GM13976 (cell line): ENCODE measurements at regions of chr18 and their contacts with region 1.

Region 1: GRCh38 chr18:79378542-79379250 is 17.0 kb upstream of the NFATC1 start:
- DNase-seq: peak; percentile 90
- CTCF ChIP-seq: peak; percentile 96

Region 2: DNA sequence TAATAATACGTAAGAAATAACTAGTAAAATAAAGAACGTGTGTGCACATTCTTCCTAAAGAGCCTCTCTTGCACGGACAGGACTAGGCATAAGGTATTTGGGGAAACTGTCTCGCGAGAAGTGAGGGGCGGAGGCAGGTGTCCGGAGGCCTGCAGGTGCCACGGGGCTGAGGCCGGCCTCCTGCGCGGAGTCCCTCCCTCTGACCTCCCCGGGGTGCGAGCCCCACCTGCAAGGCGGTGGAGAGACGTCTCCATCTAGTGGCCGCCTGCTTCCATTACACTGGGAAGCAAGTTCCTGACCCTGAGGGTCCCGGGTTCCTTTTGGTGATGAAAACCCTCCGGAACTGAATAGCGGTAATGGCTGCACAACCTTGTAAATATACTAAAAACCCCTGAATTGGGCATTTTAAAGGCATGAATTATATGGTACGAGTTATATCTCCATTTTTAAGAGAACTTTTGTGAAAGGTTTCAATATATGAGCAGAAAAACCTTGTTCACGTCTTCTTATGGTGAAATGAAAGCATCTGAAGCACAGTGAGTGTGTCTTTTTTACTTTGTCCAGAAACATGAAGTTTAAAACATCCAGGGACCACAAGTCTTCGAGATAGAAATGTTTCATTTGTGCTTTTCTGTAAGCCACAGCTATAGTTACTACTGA is 265.4 kb after region 1 on chr18:
- in situ Hi-C with region 1: loop called (anchors 5 kb)
- DNase-seq: peak; percentile 93
- CTCF ChIP-seq: peak; percentile 89